A673 (cell line): ENCODE measurements at regions of chr1 and their contacts with region 1.

Region 1: DNA sequence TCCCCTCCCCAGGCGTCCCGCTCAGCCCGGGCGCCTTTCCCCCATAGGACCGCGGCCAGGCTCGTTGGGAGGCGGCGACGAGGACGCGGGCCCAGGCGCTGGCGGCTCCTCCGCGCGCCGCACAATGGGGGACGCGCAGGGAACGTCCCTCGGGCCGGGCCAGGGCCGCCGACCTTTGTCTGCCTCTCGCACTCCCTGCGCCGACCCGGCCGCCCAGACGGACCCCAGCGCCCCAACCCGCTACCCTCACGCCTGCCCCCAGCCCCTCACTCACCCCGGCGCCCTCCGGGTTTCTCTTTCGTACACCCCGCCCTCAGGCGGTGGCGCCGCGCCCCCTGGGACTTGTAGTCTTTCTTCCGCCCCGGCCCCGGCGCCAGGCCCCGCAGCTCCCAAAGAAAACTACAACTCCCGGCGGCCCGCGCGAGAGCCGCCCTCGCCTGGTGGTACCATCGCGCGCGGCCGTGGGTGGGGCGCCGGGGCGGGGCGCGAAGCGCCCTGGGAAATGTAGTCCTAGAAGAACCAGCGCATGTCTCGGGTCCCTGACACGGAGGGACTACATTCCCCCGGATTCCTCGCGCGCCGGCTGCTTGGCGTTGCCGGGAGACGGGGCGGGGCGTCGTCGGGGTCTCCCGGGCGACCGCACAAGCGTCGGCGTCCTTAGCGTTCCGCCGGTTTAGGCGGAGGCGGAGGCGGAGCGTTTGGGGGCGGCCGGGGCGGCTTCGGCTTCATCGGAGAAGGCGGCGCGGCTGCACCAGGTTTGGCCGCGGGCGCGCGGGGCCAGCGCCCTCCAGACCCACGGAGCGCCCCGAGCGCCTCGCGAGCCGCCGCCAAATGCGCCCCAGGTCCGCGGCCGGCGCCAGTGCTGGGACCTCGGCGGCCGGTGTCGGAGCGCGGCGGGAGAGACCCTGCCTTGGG is at the start of gene C1orf159:
- DNase-seq: peak; percentile 99
- H3K4me3 ChIP-seq: peak within 1 kb of the TSS; percentile 94
- H3K27ac ChIP-seq: peak within 1 kb of the TSS; percentile 79
- H3K4me1 ChIP-seq: peaks cover 4% of the 10 kb centered on the region
- H3K27me3 ChIP-seq: no peaks in the 10 kb centered on the region
- CTCF ChIP-seq: no peak
- total RNA-seq, gene C1orf159: 26.8 and 28.4 TPM in 2 replicates

Region 2: GRCh38 chr1:1033009-1033587 is 82.9 kb before region 1 on chr1:
- CTCF ChIA-PET with region 1: interaction called, 3 read pairs
- POLR2A ChIA-PET with region 1: no interaction called
- intact Hi-C with region 1: loop called (anchors 10 kb)
- DNase-seq: peak; percentile 96
- H3K4me3 ChIP-seq: peak overlapping the region; percentile 48
- H3K27ac ChIP-seq: peak overlapping the region; percentile 50
- H3K4me1 ChIP-seq: peaks cover 20% of the 10 kb centered on the region
- H3K27me3 ChIP-seq: no peaks in the 10 kb centered on the region
- CTCF ChIP-seq: peak; percentile 83

Region 3: GRCh38 chr1:1374929-1375662 is 259.1 kb after region 1 on chr1 and contains the start of gene AURKAIP1:
- CTCF ChIA-PET with region 1: no interaction called
- POLR2A ChIA-PET with region 1: no interaction called
- intact Hi-C with region 1: loop called (anchors 10 kb)
- DNase-seq: peak; percentile 100
- H3K4me3 ChIP-seq: peak within 1 kb of the TSS; percentile 98
- H3K27ac ChIP-seq: peak within 1 kb of the TSS; percentile 93
- H3K4me1 ChIP-seq: peaks cover 10% of the 10 kb centered on the region
- H3K27me3 ChIP-seq: no peaks in the 10 kb centered on the region
- CTCF ChIP-seq: peak; percentile 45; the same call in 1 of the 2 replicates
- total RNA-seq, gene AURKAIP1: 172 and 176 TPM in 2 replicates